A673 (cell line): ENCODE measurements at regions of chr11 and their contacts with region 1.

Region 1: GRCh38 chr11:35485656-35486322 is 39.6 kb downstream of the PAMR1 start:
- DNase-seq: peak; percentile 97
- H3K4me3 ChIP-seq: no peak overlapping the region
- H3K27ac ChIP-seq: no peak overlapping the region
- H3K4me1 ChIP-seq: no peaks in the 10 kb centered on the region
- H3K27me3 ChIP-seq: peaks cover 20% of the 10 kb centered on the region
- CTCF ChIP-seq: peak; percentile 100

Region 2: DNA sequence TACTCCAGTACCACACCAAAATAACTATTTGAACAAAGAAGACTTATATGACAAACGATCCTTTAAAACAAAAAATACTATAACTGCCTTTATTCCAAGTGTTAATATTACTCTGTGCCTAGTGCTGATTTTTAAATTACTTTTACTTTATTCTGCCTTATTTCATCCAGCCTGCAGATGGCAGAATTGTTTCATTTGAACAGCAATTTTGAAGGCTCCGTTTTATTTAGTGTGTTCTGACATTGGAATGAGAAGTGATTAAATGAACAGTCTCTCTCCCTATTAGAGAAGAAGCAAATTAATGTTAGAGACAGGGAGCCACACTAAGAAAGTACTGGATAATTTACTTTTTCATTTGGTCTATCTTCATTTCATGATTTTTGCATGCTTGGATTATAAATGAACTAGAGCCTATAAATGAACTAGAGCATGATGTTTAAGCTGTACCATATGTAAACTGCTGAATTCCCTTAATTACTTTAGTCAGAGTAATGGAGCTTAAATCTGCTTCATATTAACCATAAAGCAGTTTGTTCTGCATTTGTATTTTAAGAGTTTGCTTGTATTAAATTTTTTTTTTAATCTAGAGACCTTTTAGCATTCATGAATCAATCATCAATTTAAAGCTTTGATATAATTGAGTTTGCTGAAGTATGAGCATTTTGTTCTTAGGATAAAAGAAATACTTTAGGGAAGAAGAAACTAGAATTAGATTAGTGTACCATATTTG is 559.5 kb before region 1 on chr11:
- CTCF ChIA-PET with region 1: no interaction called
- POLR2A ChIA-PET with region 1: no interaction called
- intact Hi-C with region 1: loop called (anchors 1 kb)
- DNase-seq: peak; percentile 89
- H3K4me3 ChIP-seq: no peak overlapping the region
- H3K27ac ChIP-seq: no peak overlapping the region
- H3K4me1 ChIP-seq: peaks cover 25% of the 10 kb centered on the region
- H3K27me3 ChIP-seq: no peaks in the 10 kb centered on the region
- CTCF ChIP-seq: peak; percentile 98

Region 3: DNA sequence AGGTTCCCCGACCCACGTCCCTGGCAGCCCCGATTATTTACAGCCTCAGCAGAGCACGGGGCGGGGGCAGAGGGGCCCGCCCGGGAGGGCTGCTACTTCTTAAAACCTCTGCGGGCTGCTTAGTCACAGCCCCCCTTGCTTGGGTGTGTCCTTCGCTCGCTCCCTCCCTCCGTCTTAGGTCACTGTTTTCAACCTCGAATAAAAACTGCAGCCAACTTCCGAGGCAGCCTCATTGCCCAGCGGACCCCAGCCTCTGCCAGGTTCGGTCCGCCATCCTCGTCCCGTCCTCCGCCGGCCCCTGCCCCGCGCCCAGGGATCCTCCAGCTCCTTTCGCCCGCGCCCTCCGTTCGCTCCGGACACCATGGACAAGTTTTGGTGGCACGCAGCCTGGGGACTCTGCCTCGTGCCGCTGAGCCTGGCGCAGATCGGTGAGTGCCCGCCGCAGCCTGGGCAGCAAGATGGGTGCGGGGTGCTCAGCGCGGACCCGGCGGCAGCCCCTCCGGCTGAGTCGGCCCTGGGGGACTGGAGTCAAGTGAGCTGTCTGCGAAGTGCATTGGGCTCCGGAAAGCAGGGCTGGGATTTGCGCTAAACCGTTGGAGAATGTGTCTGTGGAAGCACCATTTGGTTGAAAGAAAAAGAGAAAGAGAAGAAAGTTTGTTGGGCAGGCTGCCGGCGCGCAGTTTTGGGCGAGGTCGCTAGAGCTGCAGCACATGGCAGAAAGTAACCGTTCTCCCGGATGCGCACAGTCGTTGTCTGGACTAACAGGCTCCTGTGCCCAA is 346.7 kb before region 1 on chr11 and contains the start of gene CD44:
- CTCF ChIA-PET with region 1: no interaction called
- POLR2A ChIA-PET with region 1: no interaction called
- intact Hi-C with region 1: no loop called
- DNase-seq: peak; percentile 68
- H3K4me3 ChIP-seq: peak within 1 kb of the TSS; percentile 48
- H3K27ac ChIP-seq: no peak within 1 kb of the TSS
- H3K4me1 ChIP-seq: peaks cover 12% of the 10 kb centered on the region
- H3K27me3 ChIP-seq: peaks cover 64% of the 10 kb centered on the region
- CTCF ChIP-seq: no peak
- total RNA-seq, gene CD44: 13.1 and 15.9 TPM in 2 replicates

Region 4: DNA sequence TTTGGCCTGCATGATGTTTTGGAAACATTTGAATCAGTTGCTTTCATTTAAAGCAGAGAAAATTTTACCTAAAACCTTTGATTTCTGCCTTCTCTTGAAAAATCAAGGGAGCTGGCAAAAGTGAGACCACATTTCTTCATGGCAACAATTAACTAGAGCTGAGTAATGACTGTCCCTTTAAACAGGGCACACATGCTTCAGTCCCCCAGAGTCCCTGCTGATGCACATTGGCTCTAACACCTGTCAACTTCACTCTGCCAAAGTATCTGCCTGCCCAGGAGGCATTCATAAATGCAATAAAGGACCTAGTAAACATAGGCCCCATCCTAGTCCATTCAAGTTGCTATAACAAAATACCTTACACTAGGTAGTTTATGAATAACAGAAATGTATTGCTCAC is 371.0 kb after region 1 on chr11:
- CTCF ChIA-PET with region 1: interaction called, 11 read pairs
- POLR2A ChIA-PET with region 1: no interaction called
- intact Hi-C with region 1: no loop called
- DNase-seq: no peak
- H3K4me3 ChIP-seq: no peak overlapping the region
- H3K27ac ChIP-seq: no peak overlapping the region
- H3K4me1 ChIP-seq: no peaks in the 10 kb centered on the region
- H3K27me3 ChIP-seq: no peaks in the 10 kb centered on the region
- CTCF ChIP-seq: no peak

Region 5: GRCh38 chr11:36131721-36132397 is 646.1 kb after region 1 on chr11:
- CTCF ChIA-PET with region 1: interaction called, 4 read pairs
- POLR2A ChIA-PET with region 1: no interaction called
- intact Hi-C with region 1: loop called (anchors 1 kb)
- DNase-seq: peak; percentile 77
- H3K4me3 ChIP-seq: no peak overlapping the region
- H3K27ac ChIP-seq: no peak overlapping the region
- H3K4me1 ChIP-seq: peaks cover 1% of the 10 kb centered on the region
- H3K27me3 ChIP-seq: no peaks in the 10 kb centered on the region
- CTCF ChIP-seq: peak; percentile 99

Region 6: GRCh38 chr11:36265793-36266628 is 780.2 kb after region 1 on chr11:
- CTCF ChIA-PET with region 1: interaction called, 7 read pairs
- POLR2A ChIA-PET with region 1: no interaction called
- intact Hi-C with region 1: loop called (anchors 2 kb)
- DNase-seq: peak; percentile 87
- H3K4me3 ChIP-seq: no peak overlapping the region
- H3K27ac ChIP-seq: no peak overlapping the region
- H3K4me1 ChIP-seq: no peaks in the 10 kb centered on the region
- H3K27me3 ChIP-seq: peaks cover 2% of the 10 kb centered on the region
- CTCF ChIP-seq: peak; percentile 100